ENCODE measurements at regions of chr10 and their contacts with region 1.

Region 1: DNA sequence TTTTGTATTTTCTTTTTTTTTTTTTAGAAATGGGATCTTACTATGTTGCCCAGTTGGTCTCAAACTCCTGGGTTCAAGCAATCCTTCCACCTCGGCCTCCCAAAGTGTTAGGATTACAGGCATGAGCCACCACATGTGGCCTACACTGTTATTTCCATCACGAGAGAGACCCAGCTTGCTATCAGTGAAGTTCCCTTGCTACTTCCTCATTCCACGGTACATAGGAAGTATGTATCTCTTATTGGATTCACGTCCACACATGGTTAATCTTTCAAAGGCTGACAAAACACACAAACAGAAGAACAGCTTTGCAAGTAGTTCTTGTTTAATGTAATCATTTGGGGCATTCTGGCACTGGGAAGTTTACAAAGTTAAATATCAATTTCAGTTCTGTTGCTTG is 50.9 kb downstream of the DCLRE1A start:
- DNase-seq: no peak
- H3K4me3 ChIP-seq: no peak overlapping the region
- H3K27ac ChIP-seq: no peak overlapping the region
- H3K4me1 ChIP-seq: no peaks in the 10 kb centered on the region
- H3K27me3 ChIP-seq: peaks cover 6 to 9% of the 10 kb centered on the region in 2 experiments
- CTCF ChIP-seq: no peak
- POLR2A ChIP-seq: no peak

Region 2: DNA sequence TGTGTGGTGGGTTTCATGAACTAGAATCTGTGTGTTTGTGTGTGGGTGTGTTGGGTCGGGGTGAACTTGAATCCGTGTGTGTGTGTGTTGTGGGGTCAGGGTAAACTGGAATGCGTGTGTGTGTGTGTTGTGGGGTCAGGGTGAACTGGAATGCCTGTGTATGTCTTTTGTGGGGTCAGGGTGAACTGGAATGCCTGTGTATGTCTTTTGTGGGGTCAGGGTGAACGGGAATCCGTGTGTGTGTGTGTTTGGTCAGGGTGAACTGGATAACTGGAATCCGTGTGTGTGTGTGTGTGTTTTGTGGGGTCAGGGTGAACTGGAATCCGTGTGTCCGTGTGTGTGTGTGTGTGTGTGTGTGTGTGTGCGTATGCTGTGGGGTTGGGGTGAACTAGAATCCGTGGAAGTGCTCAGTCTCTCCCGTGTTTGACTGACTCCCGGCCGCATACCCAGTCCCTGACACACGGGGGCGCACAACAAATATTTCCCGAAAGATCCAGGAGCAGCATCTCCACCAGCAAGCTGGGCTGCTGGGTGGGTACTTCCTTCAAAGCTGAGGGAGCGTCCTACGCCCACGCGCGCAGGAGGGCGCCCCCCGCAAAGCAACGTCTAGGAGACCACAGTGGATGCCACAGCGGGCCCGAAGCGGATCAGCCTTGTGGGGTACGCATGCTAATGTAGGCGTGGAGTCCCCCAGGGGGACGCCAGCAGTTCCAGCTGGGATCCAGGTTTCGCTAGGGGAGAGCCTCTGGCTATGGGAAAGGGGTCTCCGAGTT is 124.1 kb before region 1 on chr10:
- CTCF ChIA-PET with region 1: interaction called, 3 read pairs
- POLR2A ChIA-PET with region 1: no interaction called
- dilution Hi-C with region 1: no loop called
- intact Hi-C with region 1: loop called (anchors 2 kb)
- DNase-seq: peak; percentile 87
- H3K4me3 ChIP-seq: peak overlapping the region; percentile 77 to 82 (median 78)
- H3K27ac ChIP-seq: peak overlapping the region; percentile 90
- H3K4me1 ChIP-seq: peaks cover 11% of the 10 kb centered on the region
- H3K27me3 ChIP-seq: no peaks in the 10 kb centered on the region
- CTCF ChIP-seq: peak; percentile 73 to 81
- POLR2A ChIP-seq: no peak

Region 3: GRCh38 chr10:113704637-113705343 is 98.2 kb before region 1 on chr10:
- CTCF ChIA-PET with region 1: interaction called, 3 read pairs
- POLR2A ChIA-PET with region 1: no interaction called
- dilution Hi-C with region 1: no loop called
- intact Hi-C with region 1: loop called (anchors 1 kb)
- DNase-seq: peak; percentile 50
- H3K4me3 ChIP-seq: no peak overlapping the region
- H3K27ac ChIP-seq: no peak overlapping the region
- H3K4me1 ChIP-seq: peaks cover 20% of the 10 kb centered on the region
- H3K27me3 ChIP-seq: no peaks in the 10 kb centered on the region
- CTCF ChIP-seq: peak; percentile 52 to 59
- POLR2A ChIP-seq: no peak

Region 4: GRCh38 chr10:114110174-114110972 is 307.4 kb after region 1 on chr10:
- CTCF ChIA-PET with region 1: interaction called, 210 read pairs
- POLR2A ChIA-PET with region 1: no interaction called
- dilution Hi-C with region 1: loop called (anchors 10 kb)
- intact Hi-C with region 1: loop called (anchors 2 kb)
- DNase-seq: no peak
- H3K4me3 ChIP-seq: no peak overlapping the region
- H3K27ac ChIP-seq: no peak overlapping the region
- H3K4me1 ChIP-seq: no peaks in the 10 kb centered on the region
- H3K27me3 ChIP-seq: peaks cover 0 to 5% of the 10 kb centered on the region in 2 experiments
- CTCF ChIP-seq: peak in 1 of 2 donors; percentile 13
- POLR2A ChIP-seq: no peak

Region 5: GRCh38 chr10:114121031-114121430 is 318.0 kb after region 1 on chr10:
- CTCF ChIA-PET with region 1: interaction called, 11 read pairs
- POLR2A ChIA-PET with region 1: no interaction called
- dilution Hi-C with region 1: loop called (anchors 10 kb)
- intact Hi-C with region 1: no loop called
- DNase-seq: no peak
- H3K4me3 ChIP-seq: no peak overlapping the region
- H3K27ac ChIP-seq: no peak overlapping the region
- H3K4me1 ChIP-seq: no peaks in the 10 kb centered on the region
- H3K27me3 ChIP-seq: no peaks in the 10 kb centered on the region
- CTCF ChIP-seq: no peak
- POLR2A ChIP-seq: no peak

Region 6: GRCh38 chr10:115129752-115130151 is 1326.8 kb after region 1 on chr10:
- CTCF ChIA-PET with region 1: interaction called, 10 read pairs
- POLR2A ChIA-PET with region 1: no interaction called
- dilution Hi-C with region 1: no loop called
- intact Hi-C with region 1: no loop called
- DNase-seq: peak; percentile 46
- H3K4me3 ChIP-seq: no peak overlapping the region
- H3K27ac ChIP-seq: no peak overlapping the region
- H3K4me1 ChIP-seq: no peaks in the 10 kb centered on the region
- H3K27me3 ChIP-seq: no peaks in the 10 kb centered on the region
- CTCF ChIP-seq: no peak
- POLR2A ChIP-seq: no peak